ENCODE measurements at regions of chr17 and their contacts with region 1.

Region 1: GRCh38 chr17:74457146-74457819 is 9.2 kb upstream of the CD300A start:
- DNase-seq: no peak
- ATAC-seq: peak; percentile 43; the same call in 1 of the 2 replicates
- H3K4me3 ChIP-seq: no peak overlapping the region
- H3K27ac ChIP-seq: no peak overlapping the region
- H3K4me1 ChIP-seq: peaks cover 17% of the 10 kb centered on the region
- H3K27me3 ChIP-seq: 0 out of 2 replicates have a peak, but pooled peaks cover 2% of the 10 kb centered on the region
- CTCF ChIP-seq: peak; percentile 98

Region 2: GRCh38 chr17:74296548-74296936 is 160.7 kb before region 1 on chr17:
- CTCF ChIA-PET with region 1: no interaction called
- POLR2A ChIA-PET with region 1: no interaction called
- in situ Hi-C with region 1: no loop called
- intact Hi-C with region 1: loop called (anchors 1 kb)
- DNase-seq: no peak
- ATAC-seq: peak; percentile 79
- H3K4me3 ChIP-seq: no peak overlapping the region
- H3K27ac ChIP-seq: no peak overlapping the region
- H3K4me1 ChIP-seq: peaks cover 4% of the 10 kb centered on the region; the same call in 1 of the 2 replicates
- H3K27me3 ChIP-seq: no peaks in the 10 kb centered on the region
- CTCF ChIP-seq: peak; percentile 82

Region 3: DNA sequence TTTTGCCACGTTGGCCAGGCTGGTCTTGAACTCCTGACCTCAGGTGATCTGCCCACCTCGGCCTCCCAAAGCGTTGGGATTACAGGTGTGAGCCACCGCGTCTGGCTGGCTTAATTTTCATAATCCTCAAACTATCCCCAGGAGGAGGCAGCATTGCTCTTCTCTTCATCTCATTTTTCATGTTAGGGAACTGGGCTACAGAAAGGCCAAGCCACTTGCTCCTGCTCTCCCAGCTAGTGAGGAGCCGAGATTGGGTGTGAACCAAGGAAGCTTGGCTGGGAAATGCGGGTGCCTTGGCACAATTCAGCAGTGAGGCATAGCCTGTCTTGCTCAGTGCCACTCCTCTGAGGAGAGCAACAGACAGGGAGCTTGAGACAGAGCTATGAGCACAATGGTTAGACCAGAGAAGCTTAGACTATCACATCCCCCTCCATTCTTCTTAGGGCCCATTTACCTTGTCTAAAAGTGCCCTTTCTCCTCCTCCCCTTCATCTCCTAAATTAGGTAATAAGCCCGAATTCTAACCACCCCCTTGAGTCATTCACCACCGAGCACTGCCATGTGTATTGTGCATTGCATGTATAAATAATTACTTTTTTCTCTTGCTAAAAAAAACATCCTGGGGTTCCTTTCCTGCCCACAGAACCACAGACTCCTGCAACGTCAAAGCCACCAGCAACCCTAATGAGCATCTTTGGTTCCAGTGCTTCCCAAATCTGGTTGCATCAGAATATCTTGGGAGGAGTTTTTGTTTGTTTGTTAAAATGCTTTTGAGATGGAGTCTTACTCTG is 151.2 kb before region 1 on chr17:
- CTCF ChIA-PET with region 1: interaction called, 3 read pairs
- POLR2A ChIA-PET with region 1: interaction called, 14 read pairs
- in situ Hi-C with region 1: no loop called
- intact Hi-C with region 1: loop called (anchors 1 kb)
- DNase-seq: no peak
- ATAC-seq: peak; percentile 56
- H3K4me3 ChIP-seq: no peak overlapping the region
- H3K27ac ChIP-seq: no peak overlapping the region
- H3K4me1 ChIP-seq: no peaks in the 10 kb centered on the region
- H3K27me3 ChIP-seq: no peaks in the 10 kb centered on the region
- CTCF ChIP-seq: no peak

Region 4: GRCh38 chr17:74361230-74362068 is 95.8 kb before region 1 on chr17 and contains the start of gene BTBD17:
- CTCF ChIA-PET with region 1: interaction called, 6 read pairs
- POLR2A ChIA-PET with region 1: interaction called, 11 read pairs
- in situ Hi-C with region 1: no loop called
- intact Hi-C with region 1: no loop called
- DNase-seq: no peak
- ATAC-seq: peak; percentile 85
- H3K4me3 ChIP-seq: no peak within 1 kb of the TSS
- H3K27ac ChIP-seq: no peak within 1 kb of the TSS
- H3K4me1 ChIP-seq: no peaks in the 10 kb centered on the region
- H3K27me3 ChIP-seq: no peaks in the 10 kb centered on the region; the same call in 1 of the 2 replicates
- CTCF ChIP-seq: peak; percentile 94
- total RNA-seq, gene BTBD17: not detected

Region 5: DNA sequence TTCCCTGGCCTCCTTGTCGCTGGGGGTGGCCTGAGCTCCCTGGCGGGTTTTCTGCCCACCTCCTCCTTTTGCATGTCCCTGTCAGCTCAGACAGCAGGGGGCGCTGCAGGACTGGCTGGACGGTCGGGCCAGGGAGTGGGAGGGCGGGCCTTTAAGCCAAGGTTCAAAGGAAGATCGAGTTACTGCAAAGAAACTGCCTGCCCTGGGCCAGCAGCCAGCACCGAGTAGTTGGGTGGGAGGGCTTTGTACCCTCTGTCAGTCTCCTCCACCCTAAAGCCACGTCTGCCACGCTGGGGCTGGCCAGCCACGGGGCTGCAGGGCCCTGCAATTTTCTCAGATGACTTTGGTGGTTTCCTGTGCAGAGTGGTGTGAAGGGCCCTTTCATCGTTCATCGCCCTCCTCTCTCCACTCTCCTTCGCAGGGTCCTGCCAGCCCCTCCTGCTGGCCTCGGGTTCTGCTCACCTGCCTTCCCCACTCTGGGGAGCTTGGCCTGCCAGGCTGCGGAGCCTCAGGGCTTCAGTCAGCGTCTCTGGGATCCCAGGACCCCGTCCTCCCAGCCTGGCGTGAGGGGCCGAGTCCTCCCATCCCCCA is 77.7 kb before region 1 on chr17:
- CTCF ChIA-PET with region 1: interaction called, 62 read pairs
- POLR2A ChIA-PET with region 1: no interaction called
- in situ Hi-C with region 1: no loop called
- intact Hi-C with region 1: loop called (anchors 1 kb)
- DNase-seq: no peak
- ATAC-seq: peak; percentile 92
- H3K4me3 ChIP-seq: peak overlapping the region in 1 of 2 experiments; percentile 16; a peak in 1 of 4 replicates
- H3K27ac ChIP-seq: no peak overlapping the region; the same call in 1 of the 2 replicates
- H3K4me1 ChIP-seq: peaks cover 10% of the 10 kb centered on the region
- H3K27me3 ChIP-seq: peaks cover 3% of the 10 kb centered on the region
- CTCF ChIP-seq: peak; percentile 97

Region 6: GRCh38 chr17:74391771-74392170 is 65.5 kb before region 1 on chr17:
- CTCF ChIA-PET with region 1: interaction called, 13 read pairs
- POLR2A ChIA-PET with region 1: no interaction called
- in situ Hi-C with region 1: no loop called
- intact Hi-C with region 1: no loop called
- DNase-seq: no peak
- ATAC-seq: no peak
- H3K4me3 ChIP-seq: no peak overlapping the region
- H3K27ac ChIP-seq: no peak overlapping the region
- H3K4me1 ChIP-seq: no peaks in the 10 kb centered on the region
- H3K27me3 ChIP-seq: no peaks in the 10 kb centered on the region
- CTCF ChIP-seq: no peak

Region 7: DNA sequence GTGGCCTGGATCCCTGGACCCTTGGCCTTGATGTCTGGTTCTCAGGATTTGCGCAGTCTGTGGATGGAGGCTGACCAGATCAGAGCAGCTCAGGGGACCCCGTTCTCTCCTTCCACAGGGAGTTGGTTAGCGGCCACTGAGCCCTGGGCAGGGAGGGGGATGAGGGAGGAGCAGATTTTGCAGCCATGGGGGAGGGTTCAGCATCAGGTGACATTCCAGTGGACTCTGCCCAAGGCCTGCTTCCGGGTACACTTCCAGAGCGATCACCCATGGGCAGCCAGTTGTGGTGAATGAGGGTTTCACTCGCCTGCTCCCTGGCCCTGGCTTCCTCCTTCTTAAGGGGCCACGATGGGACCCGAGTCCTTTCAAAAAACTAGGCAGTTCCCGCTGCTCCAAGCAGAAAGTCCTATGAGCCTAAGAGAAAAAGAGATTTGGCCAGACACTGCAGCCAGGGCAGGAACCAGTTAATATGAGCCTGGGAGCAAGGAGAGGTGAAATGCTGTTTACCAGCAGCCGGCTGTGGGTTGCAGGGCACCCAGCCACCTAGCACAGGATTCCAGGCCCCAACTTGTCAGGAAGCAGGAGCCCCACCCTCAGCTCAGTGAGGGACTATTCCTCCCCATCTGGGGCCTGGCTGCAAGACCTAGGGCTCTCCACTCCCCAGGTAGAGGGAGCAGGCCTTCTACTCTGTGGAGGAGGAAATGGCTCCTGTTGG is 30.1 kb before region 1 on chr17:
- CTCF ChIA-PET with region 1: no interaction called
- POLR2A ChIA-PET with region 1: no interaction called
- in situ Hi-C with region 1: no loop called
- intact Hi-C with region 1: no loop called
- DNase-seq: no peak
- ATAC-seq: no peak
- H3K4me3 ChIP-seq: no peak overlapping the region
- H3K27ac ChIP-seq: peak overlapping the region; percentile 79
- H3K4me1 ChIP-seq: peaks cover 47% of the 10 kb centered on the region
- H3K27me3 ChIP-seq: no peaks in the 10 kb centered on the region
- CTCF ChIP-seq: no peak

Measured in Panc1 (cell line).